ENCODE measurements at regions of chr2 and their contacts with region 1.

Region 1: GRCh38 chr2:230987137-230988020 is 8.5 kb upstream of the SPATA3 start:
- DNase-seq: no peak
- ATAC-seq: peak; percentile 49
- H3K4me3 ChIP-seq: peak overlapping the region; percentile 89
- H3K27ac ChIP-seq: peak overlapping the region; percentile 100
- H3K4me1 ChIP-seq: peaks cover 42% of the 10 kb centered on the region
- H3K27me3 ChIP-seq: no peaks in the 10 kb centered on the region; a peak in 1 of 4 replicates
- CTCF ChIP-seq: peak; percentile 85 to 98 (median 92); a peak in 5 of 6 replicates
- EP300 ChIP-seq: no peak
- POLR2A ChIP-seq: no peak
- RAD21 ChIP-seq: peak; percentile 98

Region 2: DNA sequence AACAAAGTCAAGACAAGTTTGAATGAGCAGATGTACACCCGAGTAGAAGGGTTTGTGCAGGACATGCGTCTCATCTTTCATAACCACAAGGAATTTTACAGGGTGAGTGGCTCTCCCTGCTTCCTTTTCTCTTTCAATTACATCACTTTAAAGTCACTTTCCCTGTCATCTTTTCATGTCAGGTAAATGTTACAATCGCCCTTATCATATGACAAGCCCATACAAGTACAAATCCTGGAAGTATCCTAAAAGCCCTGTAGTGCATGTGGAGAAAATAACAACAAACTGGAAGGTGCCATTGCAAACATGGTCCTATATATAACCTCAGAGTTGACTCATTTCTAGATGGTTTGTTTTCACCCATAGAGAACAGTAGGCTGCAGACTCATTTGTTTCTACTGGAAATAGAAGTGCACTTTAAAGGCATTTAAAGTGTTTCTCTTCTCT is 445.4 kb before region 1 on chr2:
- CTCF ChIA-PET with region 1: no interaction called
- POLR2A ChIA-PET with region 1: no interaction called
- RAD21 ChIA-PET with region 1: no interaction called
- SMC1A ChIA-PET with region 1: no interaction called
- in situ Hi-C with region 1: no loop called
- intact Hi-C with region 1: no loop called
- DNase-seq: peak; percentile 54
- ATAC-seq: peak; percentile 76
- H3K4me3 ChIP-seq: peak overlapping the region; percentile 21; the same call in 1 of the 2 replicates
- H3K27ac ChIP-seq: peak overlapping the region; percentile 41; the same call in 1 of the 2 replicates
- H3K4me1 ChIP-seq: peaks cover 53% of the 10 kb centered on the region
- H3K27me3 ChIP-seq: no peaks in the 10 kb centered on the region
- CTCF ChIP-seq: no peak
- EP300 ChIP-seq: peak; percentile 25 to 47; a peak in 2 of 4 replicates
- POLR2A ChIP-seq: no peak
- RAD21 ChIP-seq: 0 out of 2 replicates have a peak, but pooled peaks have one; percentile 4

Region 3: DNA sequence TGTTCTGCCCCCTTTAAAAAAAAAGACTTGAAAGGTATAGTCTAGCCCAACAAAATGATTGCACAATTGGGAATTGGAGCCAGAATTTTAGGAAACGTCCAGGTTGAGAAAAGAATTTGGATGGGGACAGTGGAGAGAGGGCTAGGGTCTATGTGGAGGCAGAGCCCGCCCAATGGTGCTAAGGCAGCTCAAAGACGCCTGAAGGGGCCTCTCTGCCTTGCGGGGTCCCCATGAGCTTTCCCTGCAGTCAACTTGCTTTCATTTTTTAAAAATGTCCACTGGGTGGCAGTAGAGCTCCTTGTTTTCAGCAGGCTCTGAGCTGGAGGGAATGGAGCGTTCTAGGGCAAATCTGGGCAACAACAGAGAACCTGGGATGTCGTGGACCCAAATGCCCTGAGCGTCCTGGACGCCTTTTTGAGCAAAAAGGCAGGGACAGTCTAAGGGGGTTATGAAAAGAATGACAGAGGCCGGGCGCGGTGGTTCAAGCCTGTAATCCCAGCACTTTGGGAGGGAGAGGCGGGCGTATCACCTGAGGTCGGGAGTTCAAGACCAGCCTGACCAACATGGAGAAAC is 162.9 kb before region 1 on chr2:
- CTCF ChIA-PET with region 1: interaction called, 54 read pairs
- POLR2A ChIA-PET with region 1: no interaction called
- RAD21 ChIA-PET with region 1: interaction called, 52 read pairs
- SMC1A ChIA-PET with region 1: interaction called, 61 read pairs
- in situ Hi-C with region 1: no loop called
- intact Hi-C with region 1: loop called (anchors 1 kb)
- DNase-seq: peak; percentile 45
- ATAC-seq: peak; percentile 88
- H3K4me3 ChIP-seq: no peak overlapping the region
- H3K27ac ChIP-seq: no peak overlapping the region
- H3K4me1 ChIP-seq: peaks cover 5% of the 10 kb centered on the region; the same call in 1 of the 2 replicates
- H3K27me3 ChIP-seq: no peaks in the 10 kb centered on the region
- CTCF ChIP-seq: peak; percentile 59 to 77 (median 62)
- EP300 ChIP-seq: no peak
- POLR2A ChIP-seq: no peak
- RAD21 ChIP-seq: peak; percentile 91

Region 4: DNA sequence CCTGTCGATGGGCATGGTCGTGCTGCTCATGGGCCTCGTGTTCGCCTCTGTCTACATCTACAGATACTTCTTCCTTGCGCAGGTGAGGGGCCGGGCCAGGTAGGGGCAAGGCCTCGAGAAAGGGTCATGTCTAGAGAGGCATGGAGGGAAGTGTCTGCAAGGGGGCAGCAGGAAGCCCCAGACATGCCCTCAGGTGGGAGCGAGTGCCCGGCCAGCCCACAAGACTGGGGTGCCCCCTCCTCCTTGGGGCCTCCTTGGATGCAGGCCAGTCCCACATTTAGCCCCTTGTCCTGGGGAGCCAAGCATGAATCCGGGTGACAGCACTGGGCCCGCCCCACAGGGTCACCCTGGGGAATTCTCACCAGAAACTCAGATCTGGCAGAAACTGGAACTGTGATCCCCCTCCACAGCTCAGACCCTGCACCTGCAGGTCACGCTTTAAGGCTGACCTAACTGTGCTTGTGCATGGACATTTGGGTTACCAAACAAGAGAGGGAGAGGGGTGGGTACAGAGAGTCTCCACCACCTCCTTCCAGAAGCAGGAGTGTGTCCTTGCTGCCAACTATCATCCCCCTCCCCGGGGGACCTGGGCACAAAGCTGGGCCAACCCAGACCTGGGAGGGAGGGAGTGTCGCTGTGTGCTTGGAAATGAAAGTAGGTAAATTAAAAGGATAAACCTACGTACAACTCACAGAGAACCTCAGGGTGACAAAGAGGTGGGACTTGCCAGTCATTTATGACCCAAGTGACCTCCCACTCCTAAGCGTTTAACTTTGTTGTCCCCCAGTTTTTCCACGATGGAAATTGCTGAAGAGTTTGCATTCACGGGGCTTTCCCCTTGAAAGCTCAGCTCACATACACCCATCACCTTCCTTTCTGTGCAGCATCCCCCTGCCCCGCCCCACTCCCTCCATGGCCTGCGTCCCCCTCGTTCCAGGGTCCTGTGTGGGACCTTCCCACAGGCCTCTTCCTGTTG is 113.6 kb before region 1 on chr2:
- CTCF ChIA-PET with region 1: interaction called, 12 read pairs
- POLR2A ChIA-PET with region 1: no interaction called
- RAD21 ChIA-PET with region 1: interaction called, 4 read pairs
- SMC1A ChIA-PET with region 1: interaction called, 9 read pairs
- in situ Hi-C with region 1: no loop called
- intact Hi-C with region 1: no loop called
- DNase-seq: peak; percentile 74
- ATAC-seq: peak; percentile 88
- H3K4me3 ChIP-seq: peak overlapping the region; percentile 63
- H3K27ac ChIP-seq: peak overlapping the region; percentile 79
- H3K4me1 ChIP-seq: peaks cover 68% of the 10 kb centered on the region
- H3K27me3 ChIP-seq: no peaks in the 10 kb centered on the region
- CTCF ChIP-seq: no peak
- EP300 ChIP-seq: peak in 1 of 2 experiments; percentile 62; a peak in 2 of 4 replicates
- POLR2A ChIP-seq: no peak
- RAD21 ChIP-seq: peak; percentile 16; the same call in 1 of the 2 replicates

Region 5: GRCh38 chr2:230913406-230914143 is 73.8 kb before region 1 on chr2:
- CTCF ChIA-PET with region 1: interaction called, 315 read pairs
- POLR2A ChIA-PET with region 1: interaction called, 4 read pairs
- RAD21 ChIA-PET with region 1: interaction called, 31 read pairs
- SMC1A ChIA-PET with region 1: interaction called, 42 read pairs
- in situ Hi-C with region 1: no loop called
- intact Hi-C with region 1: no loop called
- DNase-seq: no peak
- ATAC-seq: peak; percentile 75
- H3K4me3 ChIP-seq: no peak overlapping the region
- H3K27ac ChIP-seq: peak overlapping the region; percentile 13; the same call in 1 of the 2 replicates
- H3K4me1 ChIP-seq: peaks cover 23% of the 10 kb centered on the region
- H3K27me3 ChIP-seq: no peaks in the 10 kb centered on the region
- CTCF ChIP-seq: peak; percentile 45 to 61 (median 60)
- EP300 ChIP-seq: no peak
- POLR2A ChIP-seq: no peak
- RAD21 ChIP-seq: peak; percentile 62

Region 6: DNA sequence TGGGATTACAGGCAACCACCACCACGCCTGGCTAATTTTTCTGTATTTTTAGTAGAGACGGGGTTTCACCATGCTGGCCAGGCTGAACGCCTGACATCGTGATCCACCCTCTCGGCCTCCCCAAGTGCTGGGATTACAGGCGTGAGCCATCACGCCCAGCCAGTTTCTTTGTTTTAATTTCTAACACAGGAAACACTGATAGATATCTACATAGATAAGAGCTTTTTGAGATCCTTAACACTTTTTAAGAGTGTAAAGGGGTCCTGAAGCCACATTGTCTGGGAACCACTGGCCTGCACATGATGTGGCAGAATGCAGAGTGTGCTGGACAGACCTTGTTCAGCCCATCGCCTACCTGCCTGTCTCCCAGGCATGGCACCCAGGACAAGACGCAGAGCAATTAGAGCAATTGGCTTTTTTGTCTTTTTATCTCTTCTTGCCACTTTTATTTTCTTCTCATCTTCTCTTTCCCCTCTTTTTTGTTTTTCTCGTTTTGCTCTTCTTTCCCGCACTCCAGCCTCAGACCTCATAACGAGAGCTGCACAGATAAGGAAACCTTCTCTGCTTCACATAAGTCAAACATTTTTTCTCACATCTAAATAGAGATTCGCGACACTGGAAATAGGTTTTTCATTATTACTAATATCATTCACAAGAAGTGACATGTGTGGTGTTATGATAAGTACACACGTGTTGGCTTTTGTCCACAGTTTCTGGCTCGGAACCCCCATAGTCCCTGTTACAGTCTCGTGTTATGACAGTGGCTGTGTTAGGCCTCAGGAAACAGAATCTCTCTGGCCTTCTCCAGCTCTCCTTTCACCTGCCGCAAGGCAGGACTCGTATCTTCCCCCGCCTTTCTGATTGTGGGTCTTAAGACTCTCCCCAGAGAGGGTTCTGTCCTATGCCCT is 37.2 kb before region 1 on chr2:
- CTCF ChIA-PET with region 1: interaction called, 372 read pairs
- POLR2A ChIA-PET with region 1: interaction called, 144 read pairs
- RAD21 ChIA-PET with region 1: interaction called, 400 read pairs
- SMC1A ChIA-PET with region 1: interaction called, 411 read pairs
- in situ Hi-C with region 1: no loop called
- intact Hi-C with region 1: loop called (anchors 1 kb)
- DNase-seq: peak; percentile 93
- ATAC-seq: peak; percentile 54
- H3K4me3 ChIP-seq: peak overlapping the region; percentile 23; the same call in 1 of the 2 replicates
- H3K27ac ChIP-seq: peak overlapping the region; percentile 99
- H3K4me1 ChIP-seq: peaks cover 83% of the 10 kb centered on the region
- H3K27me3 ChIP-seq: no peaks in the 10 kb centered on the region
- CTCF ChIP-seq: no peak
- EP300 ChIP-seq: peak; percentile 71 to 81
- POLR2A ChIP-seq: no peak; the same call in 1 of the 2 replicates
- RAD21 ChIP-seq: no peak; the same call in 1 of the 2 replicates

Region 7: DNA sequence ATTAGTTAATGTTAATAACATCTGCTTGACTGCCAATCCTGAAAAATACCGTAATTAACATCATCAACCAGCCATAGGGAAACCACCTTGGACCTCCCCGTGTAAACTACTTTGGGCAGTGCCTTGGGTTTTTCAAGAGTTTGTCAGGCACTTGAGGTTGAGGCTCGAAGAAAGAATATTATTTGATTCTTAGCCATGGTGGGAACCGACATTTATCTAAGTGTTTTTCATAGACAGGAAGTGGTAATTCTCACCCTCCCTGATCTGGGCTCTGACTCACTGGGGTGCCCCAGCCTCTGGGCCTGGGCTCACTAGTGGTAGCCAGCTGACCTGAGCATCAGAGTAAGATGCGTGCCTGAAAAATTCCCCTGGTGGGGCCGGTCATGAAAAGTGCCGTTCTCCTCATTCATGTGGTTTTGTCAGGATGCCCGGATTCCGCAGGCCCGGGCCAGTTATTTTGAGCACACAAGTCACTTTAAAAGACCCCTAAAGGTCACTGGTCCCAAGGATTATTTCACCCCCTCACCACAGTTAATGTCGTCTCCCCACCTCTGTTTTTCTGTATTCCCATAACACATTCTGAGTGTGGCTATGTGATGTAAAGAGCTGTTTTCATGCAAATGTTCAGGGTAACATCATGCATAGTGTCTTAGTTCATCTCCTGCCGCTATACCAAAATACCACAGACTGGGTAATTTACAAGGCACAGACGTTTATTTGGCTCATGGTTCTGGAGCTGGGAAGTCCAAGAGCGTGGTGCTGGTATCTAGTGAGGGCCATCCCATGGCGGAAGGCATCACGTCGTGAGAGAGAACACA is 13.1 kb before region 1 on chr2:
- CTCF ChIA-PET with region 1: interaction called, 71 read pairs
- POLR2A ChIA-PET with region 1: interaction called, 60 read pairs
- RAD21 ChIA-PET with region 1: interaction called, 114 read pairs
- SMC1A ChIA-PET with region 1: interaction called, 151 read pairs
- in situ Hi-C with region 1: no loop called
- intact Hi-C with region 1: loop called (anchors 1 kb)
- DNase-seq: peak; percentile 94
- ATAC-seq: peak; percentile 86
- H3K4me3 ChIP-seq: no peak overlapping the region; the same call in 1 of the 2 replicates
- H3K27ac ChIP-seq: peak overlapping the region; percentile 97
- H3K4me1 ChIP-seq: peaks cover 67% of the 10 kb centered on the region
- H3K27me3 ChIP-seq: no peaks in the 10 kb centered on the region
- CTCF ChIP-seq: no peak
- EP300 ChIP-seq: peak; percentile 79 to 94
- POLR2A ChIP-seq: 0 out of 2 replicates have a peak, but pooled peaks have one; percentile 44
- RAD21 ChIP-seq: peak; percentile 35